ENCODE measurements at regions of chr3 and their contacts with region 1.

Region 1: DNA sequence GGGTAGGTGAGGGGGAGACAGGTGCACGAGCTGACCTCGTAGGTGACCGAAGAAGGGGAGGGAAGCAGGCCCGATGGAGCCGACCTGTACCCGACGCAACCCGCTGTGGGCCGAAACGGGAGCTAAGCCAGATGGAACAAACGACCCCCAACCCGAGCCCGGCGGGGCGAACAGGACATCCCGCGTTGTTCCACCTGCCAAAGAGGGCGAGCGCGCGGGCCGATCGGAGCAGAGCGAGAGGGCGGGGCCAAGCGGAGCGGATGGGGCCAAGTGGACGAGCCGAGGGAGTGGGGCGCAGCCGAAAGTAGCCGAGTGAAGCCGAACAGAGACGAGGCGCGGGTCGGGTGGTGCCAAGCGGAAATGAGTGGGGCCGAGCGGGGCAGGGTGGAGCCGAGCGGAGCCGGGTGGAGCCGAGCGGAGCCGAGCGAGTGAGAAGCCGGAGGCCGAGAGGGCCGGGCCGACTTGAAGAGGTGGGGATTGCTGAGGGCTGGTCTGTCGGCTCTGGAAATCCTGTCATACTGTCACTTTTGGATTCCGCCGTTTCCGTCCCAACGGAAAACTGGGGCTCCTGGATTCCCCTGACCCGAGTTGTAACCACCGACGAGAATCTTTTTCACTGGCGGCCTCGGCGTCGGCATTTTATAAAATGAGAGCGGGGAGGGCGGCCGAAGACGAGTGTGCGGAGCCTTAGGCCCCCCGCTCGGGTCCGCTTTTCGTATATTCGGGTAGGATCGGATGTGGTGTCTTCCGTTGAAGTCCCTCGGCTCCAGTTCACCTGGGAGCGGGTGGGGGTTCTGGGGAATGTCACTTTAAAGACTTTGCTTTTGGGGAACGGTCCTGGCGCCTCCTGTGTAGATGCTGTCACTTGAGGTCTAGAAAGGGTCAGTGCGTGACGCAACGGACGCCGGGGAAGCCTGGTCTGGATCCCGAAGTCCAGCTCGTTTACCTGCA is 15.6 kb upstream of the WNT7A start:
- DNase-seq: peak; percentile 90 to 97 (median 93)
- ATAC-seq: peak; percentile 95
- H3K4me3 ChIP-seq: peak overlapping the region; percentile 70 to 72
- H3K4me3 Mint-ChIP-seq: peak overlapping the region; percentile 88
- H3K27ac ChIP-seq: peak overlapping the region; percentile 71 to 74
- H3K27ac Mint-ChIP-seq: peak overlapping the region; percentile 91
- H3K4me1 ChIP-seq: peaks cover 28% of the 10 kb centered on the region
- H3K4me1 Mint-ChIP-seq: peaks cover 35% of the 10 kb centered on the region
- H3K27me3 ChIP-seq: no peaks in the 10 kb centered on the region
- H3K27me3 Mint-ChIP-seq: no peaks in the 10 kb centered on the region
- CTCF ChIP-seq: no peak

Region 2: DNA sequence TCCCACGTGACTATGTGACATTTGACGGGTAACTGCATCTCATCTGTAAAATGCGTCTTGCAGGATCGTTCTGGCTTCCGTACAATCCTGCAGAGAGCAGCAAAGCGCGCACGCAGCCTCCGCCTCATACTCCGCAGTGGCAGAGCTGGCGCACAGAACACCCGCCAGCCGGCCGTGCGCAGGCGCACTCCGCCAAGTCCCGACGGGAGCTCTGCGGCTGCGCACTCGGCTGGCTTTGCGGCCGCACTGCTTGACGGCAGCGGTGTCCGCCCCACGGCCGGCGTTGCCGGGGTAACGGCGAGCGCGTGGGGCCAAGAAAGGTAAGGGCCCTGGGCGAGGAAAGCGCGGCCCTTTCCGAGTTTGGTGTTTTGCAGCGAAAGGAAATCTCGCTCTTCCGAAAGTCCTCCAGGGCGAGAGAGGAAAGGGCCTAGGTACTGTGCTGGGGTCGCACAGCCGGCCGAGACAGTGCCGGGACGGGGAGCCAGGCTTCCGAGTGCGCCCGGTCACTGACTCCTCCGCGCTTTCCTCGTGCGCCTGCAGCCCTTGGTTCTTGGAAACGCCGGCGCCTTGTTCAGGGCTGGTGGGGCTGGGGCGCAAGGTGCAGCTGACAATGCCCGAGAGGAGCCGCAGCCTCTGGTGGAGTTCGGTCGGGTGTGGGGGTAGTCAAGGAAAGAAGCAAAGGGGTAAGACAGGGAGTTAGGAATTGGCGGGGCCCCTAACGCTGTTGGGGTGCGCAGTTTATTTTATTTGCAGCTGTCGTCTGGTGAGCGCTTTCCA is 1411.0 kb before region 1 on chr3 and contains the start of gene TSEN2:
- CTCF ChIA-PET with region 1: no interaction called
- POLR2A ChIA-PET with region 1: no interaction called
- intact Hi-C with region 1: loop called in 1 of 2 experiments (anchors 10 kb)
- DNase-seq: peak; percentile 93 to 99 (median 96)
- ATAC-seq: peak; percentile 95
- H3K4me3 ChIP-seq: peak within 1 kb of the TSS; percentile 64 to 72
- H3K4me3 Mint-ChIP-seq: peak within 1 kb of the TSS; percentile 93
- H3K27ac ChIP-seq: peak within 1 kb of the TSS; percentile 76 to 83
- H3K27ac Mint-ChIP-seq: peak within 1 kb of the TSS; percentile 98
- H3K4me1 ChIP-seq: peaks cover 17% of the 10 kb centered on the region
- H3K4me1 Mint-ChIP-seq: peaks cover 37% of the 10 kb centered on the region
- H3K27me3 ChIP-seq: no peaks in the 10 kb centered on the region
- H3K27me3 Mint-ChIP-seq: no peaks in the 10 kb centered on the region
- CTCF ChIP-seq: no peak
- total RNA-seq, gene TSEN2: 5.1 to 6.1 TPM

Region 3: GRCh38 chr3:13836741-13837480 is 58.5 kb before region 1 on chr3:
- CTCF ChIA-PET with region 1: no interaction called
- POLR2A ChIA-PET with region 1: no interaction called
- intact Hi-C with region 1: no loop called
- DNase-seq: no peak
- ATAC-seq: no peak
- H3K4me3 ChIP-seq: no peak overlapping the region
- H3K4me3 Mint-ChIP-seq: no peak overlapping the region
- H3K27ac ChIP-seq: no peak overlapping the region
- H3K27ac Mint-ChIP-seq: no peak overlapping the region
- H3K4me1 ChIP-seq: no peaks in the 10 kb centered on the region
- H3K4me1 Mint-ChIP-seq: peaks cover 4% of the 10 kb centered on the region
- H3K27me3 ChIP-seq: no peaks in the 10 kb centered on the region
- H3K27me3 Mint-ChIP-seq: peaks cover 8% of the 10 kb centered on the region
- CTCF ChIP-seq: no peak

Region 4: GRCh38 chr3:13884851-13885703 is 10.4 kb before region 1 on chr3:
- CTCF ChIA-PET with region 1: interaction called, 32 read pairs
- POLR2A ChIA-PET with region 1: interaction called, 14 read pairs
- intact Hi-C with region 1: no loop called
- DNase-seq: peak in 8 of 9 experiments; percentile 59 to 81 (median 77)
- ATAC-seq: peak; percentile 80
- H3K4me3 ChIP-seq: no peak overlapping the region
- H3K4me3 Mint-ChIP-seq: no peak overlapping the region
- H3K27ac ChIP-seq: no peak overlapping the region
- H3K27ac Mint-ChIP-seq: no peak overlapping the region
- H3K4me1 ChIP-seq: peaks cover 16% of the 10 kb centered on the region
- H3K4me1 Mint-ChIP-seq: peaks cover 16% of the 10 kb centered on the region
- H3K27me3 ChIP-seq: peaks cover 0 to 4% of the 10 kb centered on the region in 2 experiments
- H3K27me3 Mint-ChIP-seq: peaks cover 24% of the 10 kb centered on the region
- CTCF ChIP-seq: peak; percentile 88

Region 5: GRCh38 chr3:13916375-13916774 is 20.9 kb after region 1 on chr3:
- CTCF ChIA-PET with region 1: no interaction called
- POLR2A ChIA-PET with region 1: no interaction called
- intact Hi-C with region 1: no loop called
- DNase-seq: no peak
- ATAC-seq: no peak
- H3K4me3 ChIP-seq: no peak overlapping the region
- H3K4me3 Mint-ChIP-seq: no peak overlapping the region
- H3K27ac ChIP-seq: no peak overlapping the region
- H3K27ac Mint-ChIP-seq: no peak overlapping the region
- H3K4me1 ChIP-seq: no peaks in the 10 kb centered on the region
- H3K4me1 Mint-ChIP-seq: no peaks in the 10 kb centered on the region
- H3K27me3 ChIP-seq: no peaks in the 10 kb centered on the region
- H3K27me3 Mint-ChIP-seq: peaks cover 3% of the 10 kb centered on the region
- CTCF ChIP-seq: no peak

Region 6: DNA sequence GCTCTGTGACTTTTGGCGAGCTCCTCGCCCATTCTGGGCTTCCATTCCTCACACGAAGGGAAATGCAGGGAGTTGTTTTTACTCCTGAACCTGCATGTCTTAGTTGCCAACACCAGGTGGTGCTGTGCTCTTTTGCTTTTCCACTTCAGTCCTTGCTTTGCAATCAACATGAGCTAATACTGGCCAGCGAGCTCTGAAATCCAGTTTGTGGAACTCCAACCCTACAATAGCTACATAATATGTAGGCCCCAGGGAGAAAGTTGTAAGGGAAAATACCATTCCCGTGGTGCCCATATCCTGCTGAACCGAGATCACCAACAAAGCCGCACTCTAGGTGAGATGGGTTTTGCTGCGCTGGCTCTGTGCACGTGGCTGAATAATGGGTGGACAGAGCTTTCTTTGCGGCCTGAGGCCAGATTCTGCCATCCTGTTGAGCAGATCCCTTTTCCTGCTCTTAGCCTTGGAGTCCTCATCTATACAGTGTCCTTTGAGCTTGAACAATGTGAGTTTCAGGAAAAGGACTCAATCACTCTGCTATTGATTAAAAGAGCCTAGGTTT is 308.2 kb after region 1 on chr3:
- CTCF ChIA-PET with region 1: interaction called, 16 read pairs
- POLR2A ChIA-PET with region 1: no interaction called
- intact Hi-C with region 1: loop called in 1 of 2 experiments (anchors 2 kb)
- DNase-seq: peak in 8 of 9 experiments; percentile 8 to 68 (median 39)
- ATAC-seq: peak; percentile 62
- H3K4me3 ChIP-seq: no peak overlapping the region
- H3K4me3 Mint-ChIP-seq: no peak overlapping the region
- H3K27ac ChIP-seq: no peak overlapping the region
- H3K27ac Mint-ChIP-seq: no peak overlapping the region
- H3K4me1 ChIP-seq: no peaks in the 10 kb centered on the region
- H3K4me1 Mint-ChIP-seq: no peaks in the 10 kb centered on the region
- H3K27me3 ChIP-seq: no peaks in the 10 kb centered on the region
- H3K27me3 Mint-ChIP-seq: no peaks in the 10 kb centered on the region
- CTCF ChIP-seq: peak; percentile 66

Region 7: DNA sequence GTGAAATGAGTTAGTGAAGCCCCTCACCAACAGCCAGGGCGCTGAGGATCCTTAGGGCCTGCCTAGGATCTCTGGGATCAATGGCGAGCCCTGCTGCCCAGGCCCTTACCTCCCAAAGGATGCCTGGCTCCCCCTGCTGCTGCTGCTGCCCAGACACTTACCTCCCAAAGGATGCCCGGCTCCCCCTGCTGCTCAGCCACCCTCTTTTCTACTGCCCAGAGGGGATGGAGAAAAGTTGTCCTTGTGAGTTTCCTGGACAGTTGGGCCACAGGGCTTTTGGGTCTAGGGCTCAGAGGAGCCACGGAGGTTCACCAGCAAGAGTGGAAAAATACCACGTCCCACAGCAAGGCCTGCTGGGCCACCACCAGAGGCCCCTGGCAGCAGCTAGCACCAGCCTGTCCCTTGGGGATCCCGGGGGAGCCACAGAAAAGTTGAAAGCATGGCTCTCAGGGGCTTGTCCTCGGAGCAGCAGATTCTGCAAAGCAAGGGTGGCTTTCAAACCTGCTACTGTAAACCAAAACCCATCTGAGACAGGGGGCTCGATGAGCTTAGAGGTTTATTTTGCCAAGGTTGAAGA is 566.4 kb after region 1 on chr3:
- CTCF ChIA-PET with region 1: interaction called, 22 read pairs
- POLR2A ChIA-PET with region 1: no interaction called
- intact Hi-C with region 1: no loop called
- DNase-seq: peak in 8 of 9 experiments; percentile 22 to 68 (median 53)
- ATAC-seq: peak; percentile 64
- H3K4me3 ChIP-seq: no peak overlapping the region
- H3K4me3 Mint-ChIP-seq: no peak overlapping the region
- H3K27ac ChIP-seq: no peak overlapping the region
- H3K27ac Mint-ChIP-seq: no peak overlapping the region
- H3K4me1 ChIP-seq: no peaks in the 10 kb centered on the region
- H3K4me1 Mint-ChIP-seq: no peaks in the 10 kb centered on the region
- H3K27me3 ChIP-seq: no peaks in the 10 kb centered on the region
- H3K27me3 Mint-ChIP-seq: no peaks in the 10 kb centered on the region
- CTCF ChIP-seq: no peak

Region 8: GRCh38 chr3:14921078-14921616 is 1025.7 kb after region 1 on chr3:
- CTCF ChIA-PET with region 1: interaction called, 9 read pairs
- POLR2A ChIA-PET with region 1: no interaction called
- intact Hi-C with region 1: loop called in 1 of 2 experiments (anchors 2 kb)
- DNase-seq: peak; percentile 68 to 93 (median 83)
- ATAC-seq: peak; percentile 99
- H3K4me3 ChIP-seq: no peak overlapping the region
- H3K4me3 Mint-ChIP-seq: no peak overlapping the region
- H3K27ac ChIP-seq: no peak overlapping the region
- H3K27ac Mint-ChIP-seq: no peak overlapping the region
- H3K4me1 ChIP-seq: peaks cover 4% of the 10 kb centered on the region
- H3K4me1 Mint-ChIP-seq: no peaks in the 10 kb centered on the region
- H3K27me3 ChIP-seq: no peaks in the 10 kb centered on the region
- H3K27me3 Mint-ChIP-seq: no peaks in the 10 kb centered on the region
- CTCF ChIP-seq: peak; percentile 99

Measured in CD8-positive, alpha-beta T cell (primary cell).